A673 (cell line): ENCODE measurements at regions of chr16 and their contacts with region 1.

Region 1: DNA sequence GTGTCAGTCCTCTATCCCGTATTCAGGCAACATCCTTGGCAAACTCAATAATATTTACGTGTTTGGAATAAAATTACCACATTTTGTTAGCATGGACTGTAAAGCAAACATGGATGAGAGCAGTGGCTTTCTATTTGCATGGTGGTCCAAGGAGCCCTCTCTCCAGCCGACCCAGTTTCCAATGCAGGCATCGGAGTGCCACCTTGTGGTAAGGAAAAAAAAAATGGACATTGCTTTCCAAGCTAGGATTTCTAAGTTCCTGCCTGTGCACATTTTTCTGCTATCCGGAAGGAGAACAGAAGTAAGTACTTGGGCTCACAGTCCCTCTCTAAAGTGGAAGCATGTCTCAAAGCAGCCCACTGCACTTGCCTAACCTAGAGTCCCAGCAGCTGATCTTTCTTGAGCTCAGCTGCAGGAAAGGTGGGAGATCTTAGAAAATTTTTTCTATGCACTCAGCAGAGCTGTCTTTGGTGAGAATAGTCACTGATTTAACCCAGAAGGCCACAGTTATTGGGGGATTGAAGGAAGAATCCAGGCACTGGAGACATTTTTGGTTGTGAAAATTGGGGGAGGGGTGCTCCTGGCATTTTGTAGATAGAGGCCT is 46.0 kb upstream of the ERCC4 start:
- DNase-seq: peak; percentile 60
- H3K4me3 ChIP-seq: no peak overlapping the region
- H3K27ac ChIP-seq: no peak overlapping the region
- H3K4me1 ChIP-seq: no peaks in the 10 kb centered on the region
- H3K27me3 ChIP-seq: peaks cover 5% of the 10 kb centered on the region
- CTCF ChIP-seq: peak; percentile 69

Region 2: GRCh38 chr16:12455287-12455798 is 1418.6 kb before region 1 on chr16:
- CTCF ChIA-PET with region 1: no interaction called
- POLR2A ChIA-PET with region 1: no interaction called
- intact Hi-C with region 1: loop called (anchors 5 kb)
- DNase-seq: peak; percentile 53
- H3K4me3 ChIP-seq: no peak overlapping the region
- H3K27ac ChIP-seq: no peak overlapping the region
- H3K4me1 ChIP-seq: no peaks in the 10 kb centered on the region
- H3K27me3 ChIP-seq: no peaks in the 10 kb centered on the region
- CTCF ChIP-seq: peak; percentile 81

Region 3: DNA sequence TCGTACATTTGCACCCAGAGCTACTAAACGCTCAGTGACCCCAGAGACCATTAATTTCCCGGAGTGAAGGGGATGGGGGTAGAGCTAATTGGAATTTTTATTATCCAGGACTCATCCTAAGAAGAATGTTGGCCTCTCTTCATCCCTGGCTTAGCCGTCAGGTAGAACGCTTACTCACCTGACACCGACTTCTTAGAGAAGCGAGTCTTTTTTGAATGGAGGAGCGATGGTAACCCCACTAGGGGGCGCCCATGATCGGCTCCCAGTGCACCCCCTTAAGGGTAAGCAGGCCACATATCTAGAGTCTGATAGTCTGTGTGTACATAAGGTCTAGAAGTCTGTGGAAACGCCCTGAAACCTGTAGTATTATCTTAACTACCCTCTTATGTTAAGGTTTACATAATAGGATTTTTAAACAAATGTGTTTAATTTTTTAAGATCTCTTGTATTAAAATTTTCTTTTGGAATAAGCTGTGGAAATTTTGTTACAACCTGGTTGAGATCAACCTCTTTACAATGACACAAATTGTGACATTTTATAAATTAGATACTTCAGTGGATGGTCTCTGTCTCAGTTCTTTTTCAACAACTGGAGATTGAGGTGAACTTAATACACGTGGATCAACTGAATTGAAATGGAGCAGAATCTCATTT is 1300.1 kb before region 1 on chr16:
- CTCF ChIA-PET with region 1: no interaction called
- POLR2A ChIA-PET with region 1: no interaction called
- intact Hi-C with region 1: loop called (anchors 10 kb)
- DNase-seq: peak; percentile 46
- H3K4me3 ChIP-seq: no peak overlapping the region
- H3K27ac ChIP-seq: no peak overlapping the region
- H3K4me1 ChIP-seq: no peaks in the 10 kb centered on the region
- H3K27me3 ChIP-seq: no peaks in the 10 kb centered on the region
- CTCF ChIP-seq: peak; percentile 74

Region 4: DNA sequence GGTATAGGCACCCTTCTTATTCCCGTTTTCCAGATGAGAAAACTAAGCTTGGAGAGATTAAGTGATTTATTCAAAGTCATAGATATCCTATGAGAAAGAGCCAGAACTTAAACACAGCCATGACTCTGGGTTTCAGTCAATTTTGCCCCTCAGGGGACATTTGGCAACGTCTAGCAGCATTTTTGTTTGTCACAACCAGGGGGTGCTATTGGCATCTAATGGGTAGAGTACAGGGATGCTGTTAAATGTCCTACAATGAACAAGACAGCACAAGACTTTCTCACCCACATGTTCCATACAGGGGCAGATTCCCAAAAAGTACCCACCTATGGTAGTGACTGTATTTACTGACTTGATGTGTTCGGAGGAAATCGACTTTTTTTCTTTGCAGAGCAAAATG is 977.4 kb before region 1 on chr16:
- CTCF ChIA-PET with region 1: no interaction called
- POLR2A ChIA-PET with region 1: no interaction called
- intact Hi-C with region 1: loop called (anchors 10 kb)
- DNase-seq: peak; percentile 43
- H3K4me3 ChIP-seq: no peak overlapping the region
- H3K27ac ChIP-seq: no peak overlapping the region
- H3K4me1 ChIP-seq: no peaks in the 10 kb centered on the region
- H3K27me3 ChIP-seq: peaks cover 26% of the 10 kb centered on the region
- CTCF ChIP-seq: peak; percentile 60

Region 5: DNA sequence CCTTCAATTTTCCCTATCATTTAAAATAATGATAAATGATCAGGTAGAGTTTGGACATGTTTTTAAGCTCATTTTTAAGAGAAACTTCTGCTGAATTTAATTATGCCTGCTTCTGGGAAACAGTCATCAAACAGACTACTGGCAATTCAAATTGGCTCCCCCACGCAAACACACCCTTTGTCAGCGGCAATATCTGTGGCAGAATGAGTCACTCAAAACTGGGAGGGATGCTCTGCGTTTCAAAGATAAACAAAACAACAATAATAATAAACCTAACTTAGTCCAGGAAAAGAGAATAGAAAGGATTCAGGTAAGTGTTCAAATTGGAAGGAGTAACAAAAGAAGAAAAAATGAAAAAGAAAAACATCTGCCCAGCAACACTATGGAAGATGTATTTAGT is 62.1 kb before region 1 on chr16:
- CTCF ChIA-PET with region 1: no interaction called
- POLR2A ChIA-PET with region 1: no interaction called
- intact Hi-C with region 1: no loop called
- DNase-seq: no peak
- H3K4me3 ChIP-seq: no peak overlapping the region
- H3K27ac ChIP-seq: no peak overlapping the region
- H3K4me1 ChIP-seq: no peaks in the 10 kb centered on the region
- H3K27me3 ChIP-seq: peaks cover 7% of the 10 kb centered on the region
- CTCF ChIP-seq: no peak